A673 (cell line): ENCODE measurements at regions of chr18 and their contacts with region 1.

Region 1: GRCh38 chr18:5515011-5515784 is 28.6 kb downstream of the EPB41L3 start:
- DNase-seq: no peak
- H3K4me3 ChIP-seq: no peak overlapping the region
- H3K27ac ChIP-seq: no peak overlapping the region
- H3K4me1 ChIP-seq: no peaks in the 10 kb centered on the region
- H3K27me3 ChIP-seq: peaks cover 54% of the 10 kb centered on the region
- CTCF ChIP-seq: no peak

Region 2: GRCh38 chr18:4931209-4931608 is 584.0 kb before region 1 on chr18:
- CTCF ChIA-PET with region 1: no interaction called
- POLR2A ChIA-PET with region 1: no interaction called
- intact Hi-C with region 1: no loop called
- DNase-seq: no peak
- H3K4me3 ChIP-seq: no peak overlapping the region
- H3K27ac ChIP-seq: no peak overlapping the region
- H3K4me1 ChIP-seq: no peaks in the 10 kb centered on the region
- H3K27me3 ChIP-seq: no peaks in the 10 kb centered on the region
- CTCF ChIP-seq: no peak

Region 3: DNA sequence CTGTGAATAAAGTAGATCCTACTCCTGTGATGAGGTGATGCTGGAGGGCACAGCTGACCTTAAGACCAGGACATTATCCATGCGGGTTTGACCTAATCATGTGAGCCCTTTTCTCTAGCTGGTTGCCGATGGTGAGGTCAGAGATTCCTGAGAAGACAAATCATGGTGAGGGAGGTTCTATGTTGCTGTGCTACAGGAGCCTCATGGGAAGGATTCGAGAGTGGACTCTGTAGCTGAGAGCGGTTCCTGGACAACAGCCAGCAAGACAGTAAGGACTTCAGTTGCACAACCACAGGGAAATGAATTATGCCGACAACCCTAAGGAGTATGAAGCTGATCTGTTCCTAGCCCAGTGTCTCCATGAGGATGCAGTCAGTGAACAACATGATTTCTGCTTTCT is 51.8 kb before region 1 on chr18:
- CTCF ChIA-PET with region 1: no interaction called
- POLR2A ChIA-PET with region 1: no interaction called
- intact Hi-C with region 1: loop called (anchors 5 kb)
- DNase-seq: peak; percentile 9
- H3K4me3 ChIP-seq: no peak overlapping the region
- H3K27ac ChIP-seq: no peak overlapping the region
- H3K4me1 ChIP-seq: no peaks in the 10 kb centered on the region
- H3K27me3 ChIP-seq: peaks cover 13% of the 10 kb centered on the region
- CTCF ChIP-seq: no peak